ENCODE measurements at regions of chr6 and their contacts with region 1.

Region 1: GRCh38 chr6:24883618-24884017 is 52.1 kb downstream of the RIPOR2 start:
- DNase-seq: no peak
- ATAC-seq: peak; percentile 74
- H3K4me3 Mint-ChIP-seq: peak overlapping the region; percentile 10
- H3K27ac Mint-ChIP-seq: peak overlapping the region; percentile 36
- H3K4me1 Mint-ChIP-seq: peaks cover 64% of the 10 kb centered on the region
- H3K27me3 Mint-ChIP-seq: no peaks in the 10 kb centered on the region

Region 2: GRCh38 chr6:24831771-24832716 is 51.6 kb before region 1 on chr6:
- CTCF ChIA-PET with region 1: no interaction called
- POLR2A ChIA-PET with region 1: no interaction called
- DNase-seq: no peak
- ATAC-seq: no peak
- H3K4me3 Mint-ChIP-seq: no peak overlapping the region
- H3K27ac Mint-ChIP-seq: peak overlapping the region; percentile 9
- H3K4me1 Mint-ChIP-seq: peaks cover 28% of the 10 kb centered on the region
- H3K27me3 Mint-ChIP-seq: no peaks in the 10 kb centered on the region

Region 3: DNA sequence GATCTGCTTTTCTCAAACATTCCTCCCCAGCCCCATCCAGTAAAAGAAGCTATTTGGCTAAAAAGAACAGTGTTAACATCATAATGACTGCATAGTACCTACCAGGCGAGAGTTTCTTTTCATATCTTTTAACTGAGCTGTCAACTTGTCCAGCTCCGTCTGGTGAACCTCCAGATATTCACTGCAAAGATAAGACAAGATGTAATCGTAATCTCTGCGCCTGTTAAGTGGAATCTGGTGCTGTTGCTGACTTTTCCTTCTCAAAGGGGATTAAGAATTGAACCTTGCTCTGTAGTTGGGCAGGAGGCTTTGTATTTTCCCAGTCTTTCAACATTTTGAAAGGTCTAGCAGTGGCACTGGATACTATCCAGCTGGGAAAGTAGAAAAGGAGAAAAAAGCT is 10.8 kb before region 1 on chr6:
- CTCF ChIA-PET with region 1: interaction called, 12 read pairs
- POLR2A ChIA-PET with region 1: interaction called, 3 read pairs
- DNase-seq: no peak
- ATAC-seq: no peak
- H3K4me3 Mint-ChIP-seq: no peak overlapping the region
- H3K27ac Mint-ChIP-seq: no peak overlapping the region
- H3K4me1 Mint-ChIP-seq: peaks cover 10% of the 10 kb centered on the region
- H3K27me3 Mint-ChIP-seq: no peaks in the 10 kb centered on the region